GM12878 (cell line): ENCODE measurements at regions of chr2 and their contacts with region 1.

Region 1: GRCh38 chr2:150548527-150548926 is 61.1 kb upstream of the RND3 start:
- DNase-seq: no peak
- ATAC-seq: peak; percentile 80
- H3K4me3 ChIP-seq: no peak overlapping the region
- H3K27ac ChIP-seq: no peak overlapping the region
- H3K4me1 ChIP-seq: no peaks in the 10 kb centered on the region
- H3K27me3 ChIP-seq: no peaks in the 10 kb centered on the region
- CTCF ChIP-seq: peak; percentile 38 to 41 (median 38); a peak in 4 of 6 replicates
- EP300 ChIP-seq: no peak
- POLR2A ChIP-seq: no peak
- RAD21 ChIP-seq: 0 out of 2 replicates have a peak, but pooled peaks have one; percentile 6

Region 2: GRCh38 chr2:150561076-150561475 is 12.5 kb after region 1 on chr2:
- CTCF ChIA-PET with region 1: interaction called, 10 read pairs
- POLR2A ChIA-PET with region 1: interaction called, 4 read pairs
- RAD21 ChIA-PET with region 1: interaction called, 3 read pairs
- SMC1A ChIA-PET with region 1: interaction called, 30 read pairs
- in situ Hi-C with region 1: no loop called
- intact Hi-C with region 1: no loop called
- DNase-seq: no peak
- ATAC-seq: peak; percentile 25; the same call in 2 of the 3 replicates
- H3K4me3 ChIP-seq: no peak overlapping the region
- H3K27ac ChIP-seq: no peak overlapping the region
- H3K4me1 ChIP-seq: no peaks in the 10 kb centered on the region
- H3K27me3 ChIP-seq: no peaks in the 10 kb centered on the region
- CTCF ChIP-seq: no peak
- EP300 ChIP-seq: no peak
- POLR2A ChIP-seq: no peak
- RAD21 ChIP-seq: no peak

Region 3: DNA sequence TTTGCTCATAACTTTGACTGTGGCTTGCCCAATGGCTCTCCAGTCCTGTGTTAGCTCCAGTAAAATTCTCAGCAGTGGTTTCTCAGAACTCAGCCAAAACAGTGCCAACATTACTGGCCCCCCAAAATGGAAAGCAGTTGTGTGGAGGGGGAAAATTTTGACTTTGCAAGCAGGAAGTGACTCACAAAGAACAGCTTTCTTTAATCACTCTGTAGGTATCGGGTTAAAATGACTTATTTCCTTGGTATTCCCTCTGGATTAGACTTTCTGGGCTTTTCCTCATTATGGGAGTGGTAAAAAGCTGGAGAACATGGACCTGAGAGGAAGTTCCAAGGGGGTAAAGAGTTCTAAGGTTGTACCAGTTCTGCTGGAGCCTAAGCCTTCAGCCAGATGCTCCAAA is 114.6 kb after region 1 on chr2:
- CTCF ChIA-PET with region 1: no interaction called
- POLR2A ChIA-PET with region 1: no interaction called
- RAD21 ChIA-PET with region 1: no interaction called
- SMC1A ChIA-PET with region 1: no interaction called
- in situ Hi-C with region 1: no loop called
- intact Hi-C with region 1: no loop called
- DNase-seq: no peak
- ATAC-seq: no peak
- H3K4me3 ChIP-seq: no peak overlapping the region
- H3K27ac ChIP-seq: no peak overlapping the region
- H3K4me1 ChIP-seq: no peaks in the 10 kb centered on the region
- H3K27me3 ChIP-seq: no peaks in the 10 kb centered on the region
- CTCF ChIP-seq: no peak
- EP300 ChIP-seq: no peak
- POLR2A ChIP-seq: no peak
- RAD21 ChIP-seq: no peak

Region 4: GRCh38 chr2:151315381-151315903 is 766.9 kb after region 1 on chr2:
- CTCF ChIA-PET with region 1: no interaction called
- POLR2A ChIA-PET with region 1: no interaction called
- RAD21 ChIA-PET with region 1: no interaction called
- SMC1A ChIA-PET with region 1: no interaction called
- in situ Hi-C with region 1: no loop called
- intact Hi-C with region 1: no loop called
- DNase-seq: no peak
- ATAC-seq: no peak
- H3K4me3 ChIP-seq: no peak overlapping the region
- H3K27ac ChIP-seq: no peak overlapping the region
- H3K4me1 ChIP-seq: no peaks in the 10 kb centered on the region
- H3K27me3 ChIP-seq: no peaks in the 10 kb centered on the region
- CTCF ChIP-seq: no peak
- EP300 ChIP-seq: no peak
- POLR2A ChIP-seq: no peak
- RAD21 ChIP-seq: no peak